GM10248 (cell line): ENCODE measurements at regions of chr1 and their contacts with region 1.

Region 1: DNA sequence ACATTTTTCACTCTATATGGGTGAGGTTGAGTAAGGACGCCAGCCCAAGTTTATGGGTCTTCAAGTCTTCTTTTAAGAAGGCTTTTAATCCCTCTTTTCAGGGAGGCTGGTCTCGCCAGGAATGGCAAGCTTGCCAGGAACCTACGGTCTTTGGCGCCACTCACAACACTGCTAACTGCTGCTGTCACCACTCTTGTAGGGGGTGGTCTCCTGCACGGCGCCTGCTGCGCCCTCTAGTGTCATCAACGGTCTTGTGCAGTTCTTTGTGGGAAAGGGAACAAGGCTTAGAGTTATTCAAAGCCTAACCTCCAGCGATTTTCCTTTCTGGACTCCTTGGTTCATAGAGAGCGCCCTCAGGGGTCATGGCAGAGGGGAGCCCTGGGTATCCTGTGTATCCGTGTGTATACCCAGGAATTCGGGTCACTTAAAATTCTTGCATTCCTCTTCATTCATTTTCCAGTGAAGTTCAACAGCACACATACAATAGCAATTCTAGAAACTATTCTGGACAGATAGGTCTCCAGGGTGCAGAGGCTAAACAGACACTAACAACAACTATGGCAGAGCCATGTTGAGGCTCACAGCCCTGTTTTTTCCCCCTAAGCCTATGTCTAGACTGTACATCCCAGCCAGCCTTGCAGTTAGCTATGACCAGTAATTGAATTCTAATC is 392.8 kb upstream of the CAMK1G start:
- DNase-seq: peak; percentile 71
- CTCF ChIP-seq: peak; percentile 62

Region 2: GRCh38 chr1:209113521-209113920 is 77.2 kb before region 1 on chr1:
- CTCF ChIA-PET with region 1: no interaction called
- POLR2A ChIA-PET with region 1: no interaction called
- DNase-seq: no peak
- CTCF ChIP-seq: no peak

Region 3: DNA sequence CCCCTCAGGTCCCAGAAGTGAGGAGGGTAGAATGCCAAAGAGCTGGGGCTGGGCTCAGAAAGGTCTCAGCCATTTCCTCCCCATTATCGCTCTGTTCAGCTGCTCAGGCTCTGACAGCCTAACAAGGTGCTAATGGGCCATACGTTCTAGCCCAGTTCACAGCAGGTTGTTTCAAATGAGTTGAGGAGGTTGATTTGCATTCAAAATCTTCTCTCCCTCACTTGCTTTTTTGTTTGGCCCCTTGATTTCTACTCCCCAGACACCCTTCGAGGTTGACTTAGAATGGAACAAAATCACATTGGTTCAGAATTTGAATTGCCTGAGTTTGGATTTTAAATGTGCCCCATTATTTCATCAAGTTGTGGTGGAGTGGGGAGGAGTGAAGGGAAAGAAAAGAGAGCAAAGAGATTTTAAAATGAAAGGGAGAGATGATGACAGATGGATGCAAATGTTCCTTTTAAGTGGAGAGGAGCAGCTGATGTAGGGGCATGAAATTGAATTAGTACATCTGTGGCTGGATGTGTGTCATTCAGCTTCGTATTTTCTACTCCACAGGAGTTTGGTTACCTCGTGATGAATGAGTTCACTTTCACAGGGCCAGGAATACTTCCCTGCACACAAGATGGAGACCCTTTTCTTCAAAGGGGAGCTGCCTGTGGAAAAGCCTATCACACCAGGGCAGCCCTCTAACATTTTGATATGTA is 33.0 kb before region 1 on chr1:
- CTCF ChIA-PET with region 1: no interaction called
- POLR2A ChIA-PET with region 1: no interaction called
- DNase-seq: no peak
- CTCF ChIP-seq: no peak

Region 4: DNA sequence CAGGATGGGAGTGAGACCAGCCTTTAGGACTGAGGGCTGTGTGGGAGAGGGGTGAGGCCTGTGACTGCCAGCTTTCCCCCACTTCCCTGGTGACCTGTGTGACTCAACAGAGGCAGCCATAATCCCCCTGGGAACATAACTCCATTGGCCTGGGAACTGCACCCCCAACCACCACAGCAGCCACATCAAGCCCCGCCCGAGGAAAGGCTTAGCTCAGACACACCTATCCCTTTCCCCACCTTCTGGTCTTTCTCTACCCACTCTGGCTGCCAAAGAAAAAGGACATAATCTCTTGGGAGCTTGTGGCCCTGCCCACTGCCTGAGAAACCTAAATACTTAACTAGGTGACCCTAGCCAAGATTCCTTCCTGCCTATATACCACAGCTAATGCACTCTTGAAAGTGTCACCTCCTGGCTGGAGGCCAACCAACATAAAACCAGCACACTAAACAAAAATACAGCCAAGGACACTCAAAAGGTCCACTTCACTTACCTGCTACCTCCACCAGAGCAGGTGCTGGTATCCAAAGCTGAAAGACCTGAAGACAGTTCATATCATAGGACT is 13.8 kb before region 1 on chr1:
- CTCF ChIA-PET with region 1: interaction called, 15 read pairs
- POLR2A ChIA-PET with region 1: no interaction called
- DNase-seq: no peak
- CTCF ChIP-seq: no peak

Region 5: GRCh38 chr1:209207701-209208286 is 17.1 kb after region 1 on chr1:
- CTCF ChIA-PET with region 1: interaction called, 20 read pairs
- POLR2A ChIA-PET with region 1: no interaction called
- DNase-seq: peak; percentile 68
- CTCF ChIP-seq: peak; percentile 80